ENCODE measurements at regions of chr17 and their contacts with region 1.

Region 1: DNA sequence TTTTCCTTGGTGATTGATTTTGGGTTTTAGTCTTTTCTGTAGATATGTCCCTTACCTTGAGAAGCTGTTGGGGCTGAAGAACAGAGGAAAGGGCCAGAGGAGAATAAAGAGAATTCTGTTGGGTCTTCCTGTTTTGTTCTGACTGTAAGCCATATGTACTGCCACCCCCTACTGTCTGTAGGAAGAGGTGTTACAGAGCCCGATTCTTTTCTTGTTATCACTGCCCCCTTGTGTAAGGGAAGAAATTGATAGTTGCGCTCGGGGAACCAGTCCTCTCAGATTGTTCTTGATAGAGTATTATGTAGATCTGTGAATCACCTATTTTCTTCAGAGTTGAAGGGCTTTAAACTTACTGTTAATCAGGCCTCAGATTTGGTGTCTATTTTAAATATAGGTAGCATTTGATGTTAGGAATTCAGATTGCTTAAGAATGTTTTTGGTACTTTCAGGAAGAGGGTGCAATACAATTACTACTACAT is 2.4 kb downstream of the TANC2 start:
- DNase-seq: peak in 1 of 2 donors; percentile 60
- ATAC-seq: peak; percentile 44 to 83 (median 70)
- H3K4me3 ChIP-seq: peak overlapping the region in 1 of 10 donors; percentile 88
- H3K27ac ChIP-seq: no peak overlapping the region
- H3K4me1 ChIP-seq: peaks cover 3 to 25% (median 22%) of the 10 kb centered on the region in 9 donors
- H3K27me3 ChIP-seq: no peaks in the 10 kb centered on the region
- CTCF ChIP-seq: peak; percentile 55 to 96 (median 82)

Region 2: GRCh38 chr17:62572888-62573401 is 395.5 kb before region 1 on chr17:
- intact Hi-C with region 1: loop called in 1 of 10 experiments (anchors 10 kb)
- DNase-seq: peak in 1 of 2 donors; percentile 12
- ATAC-seq: peak in 4 of 8 donors; percentile 19 to 85 (median 78)
- H3K4me3 ChIP-seq: no peak overlapping the region
- H3K27ac ChIP-seq: peak overlapping the region in 7 of 10 donors; percentile 31 to 71 (median 60)
- H3K4me1 ChIP-seq: peaks cover 0 to 22% (median 7%) of the 10 kb centered on the region in 9 donors
- H3K27me3 ChIP-seq: no peaks in the 10 kb centered on the region
- CTCF ChIP-seq: no peak

Region 3: DNA sequence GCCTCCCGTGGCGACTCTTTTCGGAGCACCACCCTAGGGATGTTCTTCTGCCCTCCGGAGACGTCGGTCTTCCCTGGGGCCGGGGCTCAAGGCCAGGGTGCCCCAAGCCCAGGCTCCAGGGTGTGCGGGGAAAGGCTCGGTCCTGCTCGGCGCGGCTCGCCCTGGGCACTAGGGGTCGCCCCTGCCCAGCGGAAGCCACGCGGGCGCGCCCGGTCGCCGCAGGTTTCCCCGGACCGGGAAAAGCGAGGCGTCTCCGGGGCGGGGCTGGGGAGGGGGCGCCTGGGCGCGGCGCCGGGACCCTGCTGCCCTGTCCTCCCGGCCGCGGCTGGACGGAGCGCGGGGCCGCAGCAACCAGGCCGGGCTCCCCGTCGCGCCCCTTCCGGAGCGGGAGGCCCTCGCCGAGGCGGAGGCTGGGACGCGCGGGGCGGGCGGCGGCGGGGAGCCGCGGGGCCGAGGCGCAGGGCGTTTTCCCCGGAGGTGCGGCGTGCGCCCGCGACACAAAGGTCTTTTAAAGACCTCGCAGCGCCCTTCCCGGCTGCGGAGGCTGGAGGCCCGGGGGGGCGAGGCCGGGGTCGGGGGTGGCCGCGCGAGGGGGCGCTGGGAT is 264.6 kb before region 1 on chr17:
- intact Hi-C with region 1: loop called (anchors 1 to 5 kb)
- DNase-seq: peak; percentile 62 to 79
- ATAC-seq: peak; percentile 84 to 92 (median 86)
- H3K4me3 ChIP-seq: peak overlapping the region; percentile 36 to 73 (median 66)
- H3K27ac ChIP-seq: peak overlapping the region; percentile 71 to 95 (median 86)
- H3K4me1 ChIP-seq: peaks cover 8 to 39% (median 26%) of the 10 kb centered on the region in 9 donors
- H3K27me3 ChIP-seq: peaks cover 0 to 25% (median 0%) of the 10 kb centered on the region in 7 donors
- CTCF ChIP-seq: peak; percentile 69 to 94 (median 89)

Region 4: DNA sequence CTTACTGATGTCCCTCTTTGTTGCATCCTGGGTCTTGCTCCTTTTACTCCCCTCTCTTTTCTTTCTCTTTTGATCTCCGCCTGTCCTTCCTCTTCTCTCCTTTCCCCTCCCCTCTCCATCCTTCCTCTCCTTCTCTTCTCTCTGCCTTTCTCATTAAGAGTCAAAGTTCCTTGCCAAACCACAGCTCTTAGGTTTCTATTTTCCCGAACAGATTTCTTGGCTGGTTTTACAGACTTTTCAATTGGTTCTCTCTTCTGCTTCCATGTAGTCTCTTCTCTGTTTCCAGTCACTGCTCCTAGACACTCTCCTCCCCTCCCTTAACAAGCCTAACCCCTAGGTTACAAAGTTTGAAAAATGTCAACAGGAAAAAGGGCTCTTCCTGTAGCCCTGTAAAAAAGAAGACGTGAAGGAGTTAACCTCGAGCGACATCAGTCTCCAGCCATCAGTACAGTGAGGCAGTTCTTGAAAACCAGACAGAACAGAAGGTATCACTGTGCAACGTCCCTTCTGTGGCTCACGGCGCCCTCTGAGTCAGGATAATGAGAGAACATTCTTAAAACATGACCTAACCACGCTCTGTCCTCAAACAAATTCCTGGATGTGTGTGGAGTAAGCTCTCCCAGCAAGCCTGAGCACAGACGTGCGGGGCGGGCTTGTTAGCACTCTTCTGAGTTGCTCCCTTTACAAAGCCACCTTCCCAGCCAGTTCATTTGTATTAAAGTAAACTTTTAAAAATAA is 148.8 kb before region 1 on chr17:
- intact Hi-C with region 1: loop called in 1 of 10 experiments (anchors 10 kb)
- DNase-seq: peak; percentile 15 to 41
- ATAC-seq: peak; percentile 80 to 99 (median 95)
- H3K4me3 ChIP-seq: peak overlapping the region in 3 of 10 donors; percentile 10 to 13 (median 12)
- H3K27ac ChIP-seq: peak overlapping the region in 7 of 10 donors; percentile 14 to 69 (median 20)
- H3K4me1 ChIP-seq: peaks cover 0 to 17% (median 12%) of the 10 kb centered on the region in 9 donors
- H3K27me3 ChIP-seq: no peaks in the 10 kb centered on the region
- CTCF ChIP-seq: no peak

Region 5: DNA sequence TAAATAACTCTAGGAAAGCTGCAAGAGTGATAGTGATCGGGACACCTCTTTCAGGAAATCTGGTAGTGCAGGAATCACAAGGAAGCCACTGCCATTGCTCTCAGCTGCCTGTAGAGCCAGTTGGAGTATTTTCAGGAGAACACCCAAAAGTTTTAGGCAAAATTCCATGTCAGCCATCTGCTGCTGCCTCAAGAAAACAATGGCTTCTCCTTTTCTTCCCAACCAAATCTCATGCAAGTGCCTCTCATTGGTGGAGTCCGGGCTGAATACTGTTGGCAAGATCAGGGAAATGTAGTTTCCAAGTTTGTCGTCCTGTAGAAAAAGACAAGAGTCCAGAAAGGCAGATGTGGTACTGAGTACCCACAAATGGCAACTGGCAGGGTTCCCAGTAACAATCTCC is 57.4 kb before region 1 on chr17:
- intact Hi-C with region 1: no loop called
- DNase-seq: no peak
- ATAC-seq: peak in 1 of 8 donors; percentile 16
- H3K4me3 ChIP-seq: no peak overlapping the region
- H3K27ac ChIP-seq: no peak overlapping the region
- H3K4me1 ChIP-seq: peaks cover 0 to 6% (median 0%) of the 10 kb centered on the region in 9 donors
- H3K27me3 ChIP-seq: peaks cover 0 to 5% (median 0%) of the 10 kb centered on the region in 7 donors
- CTCF ChIP-seq: no peak

Region 6: DNA sequence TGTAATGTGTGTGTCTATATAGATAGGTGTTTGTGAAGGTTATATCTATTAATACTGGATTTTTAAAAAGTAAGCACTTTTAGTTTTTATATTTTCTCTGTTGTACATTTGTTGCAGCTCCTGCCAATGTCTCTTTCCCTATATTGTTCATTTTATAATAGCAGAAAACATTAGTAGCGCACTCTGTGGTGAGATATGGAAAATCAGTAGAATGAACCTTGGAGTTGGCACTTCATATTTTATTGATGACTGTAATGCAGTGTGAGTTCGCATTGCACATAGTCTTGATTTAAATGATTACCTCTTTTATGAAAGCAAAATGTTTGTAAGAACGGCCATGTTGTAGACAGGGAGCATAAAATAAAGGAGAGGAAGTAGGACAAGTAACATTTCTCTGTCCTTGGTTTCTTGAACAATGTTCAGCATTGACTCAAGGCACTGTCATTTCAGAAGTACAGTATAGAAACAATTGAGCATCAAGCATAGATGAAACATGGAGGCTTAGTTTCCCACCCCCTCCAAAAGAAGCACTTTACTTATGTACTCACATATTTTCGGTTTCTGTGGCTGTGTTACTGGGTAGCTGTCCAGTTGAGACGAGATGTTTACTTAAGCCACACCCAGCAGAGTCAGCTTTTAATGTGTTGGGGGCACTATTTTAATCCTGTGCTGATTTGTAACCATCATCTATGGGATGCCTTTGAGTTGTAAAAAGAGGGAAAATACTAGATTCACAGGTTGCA is 71.6 kb after region 1 on chr17:
- intact Hi-C with region 1: no loop called
- DNase-seq: no peak
- ATAC-seq: no peak
- H3K4me3 ChIP-seq: peak overlapping the region in 5 of 10 donors; percentile 1 to 22 (median 12)
- H3K27ac ChIP-seq: no peak overlapping the region
- H3K4me1 ChIP-seq: peaks cover 0 to 19% (median 5%) of the 10 kb centered on the region in 9 donors
- H3K27me3 ChIP-seq: no peaks in the 10 kb centered on the region
- CTCF ChIP-seq: no peak

Region 7: GRCh38 chr17:63450551-63450950 is 482.1 kb after region 1 on chr17:
- intact Hi-C with region 1: no loop called
- DNase-seq: peak in 1 of 2 donors; percentile 37
- ATAC-seq: peak in 4 of 8 donors; percentile 8 to 57 (median 28)
- H3K4me3 ChIP-seq: no peak overlapping the region
- H3K27ac ChIP-seq: peak overlapping the region in 1 of 10 donors; percentile 9
- H3K4me1 ChIP-seq: peaks cover 13 to 72% (median 38%) of the 10 kb centered on the region in 9 donors
- H3K27me3 ChIP-seq: no peaks in the 10 kb centered on the region
- CTCF ChIP-seq: no peak

Measured in heart right ventricle (tissue), 16 donors.